Breast epithelium (tissue), 4 donors: ENCODE measurements at regions of chr17 and their contacts with region 1.

Region 1: GRCh38 chr17:60573201-60574051 is 26.6 kb upstream of the PPM1D start:
- DNase-seq: no peak
- H3K4me3 ChIP-seq: no peak overlapping the region
- H3K27ac ChIP-seq: peak overlapping the region in 1 of 2 donors; percentile 82
- H3K4me1 ChIP-seq: no peaks in the 10 kb centered on the region
- H3K27me3 ChIP-seq: no peaks in the 10 kb centered on the region
- CTCF ChIP-seq: no peak
- POLR2A ChIP-seq: no peak

Region 2: GRCh38 chr17:60613325-60613724 is 39.9 kb after region 1 on chr17:
- intact Hi-C with region 1: loop called (anchors 2 kb)
- DNase-seq: no peak
- H3K4me3 ChIP-seq: no peak overlapping the region
- H3K27ac ChIP-seq: no peak overlapping the region
- H3K4me1 ChIP-seq: peaks cover 0 to 7% of the 10 kb centered on the region in 2 donors
- H3K27me3 ChIP-seq: no peaks in the 10 kb centered on the region
- CTCF ChIP-seq: no peak
- POLR2A ChIP-seq: no peak

Region 3: GRCh38 chr17:60641810-60642220 is 68.4 kb after region 1 on chr17:
- intact Hi-C with region 1: no loop called
- DNase-seq: no peak
- H3K4me3 ChIP-seq: no peak overlapping the region
- H3K27ac ChIP-seq: peak overlapping the region in 1 of 2 donors; percentile 3
- H3K4me1 ChIP-seq: no peaks in the 10 kb centered on the region
- H3K27me3 ChIP-seq: no peaks in the 10 kb centered on the region
- CTCF ChIP-seq: no peak
- POLR2A ChIP-seq: no peak